SK-N-SH (cell line): ENCODE measurements at regions of chr3 and their contacts with region 1.

Region 1: DNA sequence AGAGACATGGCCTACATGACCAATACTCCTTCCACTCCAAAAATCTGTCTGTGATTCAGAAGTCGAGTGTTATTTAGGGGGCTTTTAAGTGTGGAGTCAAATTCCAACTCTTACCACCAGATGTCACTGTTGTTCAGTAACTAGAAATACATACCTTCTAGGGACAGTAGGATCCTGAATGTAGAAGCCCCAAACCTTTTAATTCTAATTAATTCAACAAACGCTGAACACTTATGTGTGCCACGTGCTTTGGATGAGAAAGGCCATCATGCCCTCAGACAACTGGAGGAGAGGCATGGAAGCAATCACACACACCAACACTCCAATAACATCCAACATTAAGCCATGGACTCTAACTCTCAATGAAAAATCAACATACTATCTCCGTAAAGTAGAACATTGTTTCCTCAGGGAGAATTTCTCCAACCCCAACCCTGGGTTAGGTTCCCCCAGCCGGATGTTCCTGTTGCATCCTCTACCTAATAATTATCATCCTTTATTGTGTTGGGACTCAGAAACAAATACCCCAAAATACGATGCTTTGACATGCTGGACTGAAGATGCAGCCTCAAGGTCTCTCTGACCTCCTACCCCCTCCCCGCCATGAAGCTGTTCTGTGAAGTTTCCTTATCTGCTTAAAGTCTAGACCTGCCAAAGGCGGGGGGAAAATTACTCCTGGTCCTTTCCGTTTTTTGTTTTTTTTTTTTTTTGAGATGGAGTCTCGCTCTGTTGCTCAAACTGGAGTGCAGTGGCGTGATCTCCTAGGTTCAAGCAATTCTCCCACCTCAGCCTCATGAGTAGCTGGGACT is 8.0 kb upstream of the CCDC13 start:
- DNase-seq: peak; percentile 70
- H3K4me3 ChIP-seq: no peak overlapping the region; a peak in 1 of 4 replicates
- H3K27ac ChIP-seq: no peak overlapping the region
- H3K4me1 ChIP-seq: no peaks in the 10 kb centered on the region
- H3K27me3 ChIP-seq: no peaks in the 10 kb centered on the region
- CTCF ChIP-seq: peak; percentile 79
- EP300 ChIP-seq: no peak
- RAD21 ChIP-seq: peak; percentile 79

Region 2: GRCh38 chr3:42819351-42819965 is 38.4 kb after region 1 on chr3:
- CTCF ChIA-PET with region 1: interaction called, 12 read pairs
- POLR2A ChIA-PET with region 1: no interaction called
- DNase-seq: peak; percentile 54
- H3K4me3 ChIP-seq: no peak overlapping the region
- H3K27ac ChIP-seq: peak overlapping the region; percentile 12 to 64; a peak in 2 of 4 replicates
- H3K4me1 ChIP-seq: peaks cover 0 to 11% of the 10 kb centered on the region in 2 experiments; a peak in 2 of 4 replicates
- H3K27me3 ChIP-seq: no peaks in the 10 kb centered on the region
- CTCF ChIP-seq: peak; percentile 28; the same call in 1 of the 2 replicates
- EP300 ChIP-seq: no peak
- RAD21 ChIP-seq: no peak

Region 3: DNA sequence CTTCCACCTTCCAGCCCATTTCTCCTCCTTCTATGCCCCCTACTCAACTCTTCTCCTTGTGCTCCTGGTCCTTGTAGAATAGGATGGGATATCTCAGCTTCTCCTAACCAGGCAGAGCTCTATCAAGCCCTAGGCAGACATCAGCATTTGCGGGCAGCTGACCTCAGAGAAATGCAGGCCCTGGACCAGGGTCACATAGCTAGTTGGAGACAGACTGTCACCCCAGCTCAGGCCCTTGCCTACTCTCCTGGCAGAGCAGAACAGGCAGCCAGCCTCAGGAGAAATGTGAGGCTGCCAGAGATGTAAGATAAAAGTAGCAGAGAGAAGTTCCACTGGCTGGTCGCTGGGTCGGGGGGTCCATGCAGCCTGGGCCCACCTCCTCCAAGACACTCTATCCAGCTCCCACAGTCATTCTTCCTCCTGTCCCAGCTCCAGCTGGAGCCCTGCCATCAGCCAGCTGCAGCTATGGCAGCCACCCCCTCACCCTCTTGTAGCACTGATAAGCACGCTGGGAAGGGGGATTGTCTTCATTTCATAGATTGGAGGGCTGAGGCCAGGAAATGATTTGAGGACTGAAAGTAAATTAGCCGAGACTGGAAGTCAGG is 90.6 kb after region 1 on chr3:
- CTCF ChIA-PET with region 1: interaction called, 34 read pairs
- POLR2A ChIA-PET with region 1: no interaction called
- DNase-seq: peak; percentile 78
- H3K4me3 ChIP-seq: no peak overlapping the region
- H3K27ac ChIP-seq: peak overlapping the region in 1 of 2 experiments; percentile 92; a peak in 2 of 4 replicates
- H3K4me1 ChIP-seq: peaks cover 0 to 22% of the 10 kb centered on the region in 2 experiments; a peak in 1 of 4 replicates
- H3K27me3 ChIP-seq: peaks cover 19% of the 10 kb centered on the region; the same call in 1 of the 2 replicates
- CTCF ChIP-seq: no peak
- EP300 ChIP-seq: peak in 1 of 2 experiments; percentile 37; a peak in 2 of 4 replicates
- RAD21 ChIP-seq: no peak

Region 4: GRCh38 chr3:42880601-42881451 is 99.7 kb after region 1 on chr3:
- CTCF ChIA-PET with region 1: interaction called, 34 read pairs
- POLR2A ChIA-PET with region 1: no interaction called
- DNase-seq: peak; percentile 93
- H3K4me3 ChIP-seq: peak overlapping the region; percentile 55 to 57
- H3K27ac ChIP-seq: no peak overlapping the region
- H3K4me1 ChIP-seq: peaks cover 0 to 10% of the 10 kb centered on the region in 2 experiments; a peak in 1 of 4 replicates
- H3K27me3 ChIP-seq: no peaks in the 10 kb centered on the region
- CTCF ChIP-seq: peak; percentile 78
- EP300 ChIP-seq: no peak
- RAD21 ChIP-seq: peak; percentile 90